Activated CD4-positive, alpha-beta memory T cell treated with anti-CD3 and anti-CD28 coated beads, Interleukin-2, amount 10 ng/mL, durations not matched to agents 7 days and 5 days (primary cell): ENCODE measurements at regions of chr11 and their contacts with region 1.

Region 1: GRCh38 chr11:58629857-58630256 is 7.4 kb downstream of the CNTF start:
- DNase-seq: no peak
- H3K4me3 Mint-ChIP-seq: no peak overlapping the region
- H3K27ac Mint-ChIP-seq: no peak overlapping the region
- H3K4me1 Mint-ChIP-seq: peaks cover 5% of the 10 kb centered on the region
- H3K27me3 Mint-ChIP-seq: no peaks in the 10 kb centered on the region

Region 2: GRCh38 chr11:58654079-58654907 is 24.4 kb after region 1 on chr11:
- CTCF ChIA-PET with region 1: interaction called, 10 read pairs
- POLR2A ChIA-PET with region 1: no interaction called
- DNase-seq: peak; percentile 74
- H3K4me3 Mint-ChIP-seq: no peak overlapping the region
- H3K27ac Mint-ChIP-seq: no peak overlapping the region
- H3K4me1 Mint-ChIP-seq: peaks cover 5% of the 10 kb centered on the region
- H3K27me3 Mint-ChIP-seq: peaks cover 3% of the 10 kb centered on the region